Transverse colon (tissue), 4 donors: ENCODE measurements at regions of chr3 and their contacts with region 1.

Region 1: DNA sequence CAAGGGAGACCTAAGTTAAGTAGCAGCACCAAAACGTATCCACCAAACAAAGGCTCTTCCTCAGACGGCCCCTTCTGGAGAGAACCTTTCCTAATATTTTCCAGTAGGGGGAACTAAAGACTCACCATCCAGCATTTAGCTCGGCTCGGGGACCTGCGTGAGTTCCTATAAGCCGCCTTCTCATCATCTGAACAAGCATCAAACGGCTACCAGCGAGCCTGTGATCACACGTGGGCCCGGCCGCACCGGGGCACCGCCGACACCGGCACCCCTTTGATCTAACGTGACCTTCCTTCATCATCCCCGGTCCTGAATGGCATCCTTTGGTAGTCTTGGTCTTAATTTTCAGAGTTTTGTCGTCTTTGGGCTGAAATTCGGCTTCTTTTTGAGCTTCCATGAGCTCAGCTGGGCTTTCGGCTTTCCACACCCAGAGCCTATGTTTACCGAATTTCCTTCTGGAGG is 1.4 kb upstream of the ROBO2 start:
- DNase-seq: peak; percentile 40
- H3K4me3 ChIP-seq: peak overlapping the region in 2 of 4 donors; percentile 38 to 52
- H3K27ac ChIP-seq: no peak overlapping the region
- H3K4me1 ChIP-seq: peaks cover 0 to 21% (median 15%) of the 10 kb centered on the region in 4 donors
- H3K27me3 ChIP-seq: peaks cover 62% of the 10 kb centered on the region
- CTCF ChIP-seq: peak; percentile 47 to 62 (median 56)
- EP300 ChIP-seq: no peak
- POLR2A ChIP-seq: no peak

Region 2: GRCh38 chr3:77240072-77240650 is 201.7 kb after region 1 on chr3:
- in situ Hi-C with region 1: no loop called
- intact Hi-C with region 1: loop called (anchors 5 kb)
- DNase-seq: no peak
- H3K4me3 ChIP-seq: no peak overlapping the region
- H3K27ac ChIP-seq: no peak overlapping the region
- H3K4me1 ChIP-seq: no peaks in the 10 kb centered on the region
- H3K27me3 ChIP-seq: no peaks in the 10 kb centered on the region
- CTCF ChIP-seq: no peak
- EP300 ChIP-seq: no peak
- POLR2A ChIP-seq: no peak

Region 3: DNA sequence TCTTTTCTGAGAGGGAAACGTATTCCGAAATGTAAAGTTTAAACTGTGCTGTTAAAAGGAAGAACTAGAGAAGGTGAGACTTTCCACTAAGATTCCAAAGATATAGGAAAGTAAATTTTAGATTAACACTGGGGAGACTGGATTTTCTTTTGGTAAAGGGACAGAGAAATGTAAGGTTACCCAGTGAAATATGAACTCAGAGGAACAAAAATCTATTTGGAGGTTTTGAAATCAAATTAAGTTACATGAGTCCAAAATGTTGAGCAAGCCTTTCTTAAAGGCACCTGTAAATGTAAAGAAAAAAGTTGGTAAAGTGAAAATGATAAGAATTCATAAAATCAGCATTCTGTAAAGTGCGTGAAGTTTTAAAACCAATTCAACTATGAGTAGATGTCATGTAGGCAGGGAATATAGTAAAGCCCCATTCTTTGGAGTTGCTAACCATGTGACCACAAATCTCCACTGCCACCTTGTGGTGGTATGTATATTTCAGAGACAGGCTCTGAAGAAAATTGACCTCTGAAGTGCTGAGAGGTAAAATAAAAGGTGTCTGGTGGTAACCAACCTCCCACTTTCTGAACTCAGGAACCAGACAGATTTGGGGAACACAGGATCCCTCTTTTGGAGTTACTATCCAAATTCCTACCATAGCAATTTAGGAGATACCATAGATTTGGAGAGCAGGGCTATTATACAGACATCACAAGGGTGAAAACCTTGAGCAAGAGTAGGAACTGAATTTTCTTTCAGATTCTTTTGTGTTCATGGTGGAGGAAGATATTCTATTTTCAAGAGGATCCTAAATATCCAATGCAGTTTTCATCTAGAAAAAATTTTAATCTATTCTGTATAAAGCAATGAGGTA is 216.7 kb after region 1 on chr3:
- in situ Hi-C with region 1: loop called (anchors 5 to 10 kb)
- intact Hi-C with region 1: loop called (anchors 5 kb)
- DNase-seq: peak; percentile 16
- H3K4me3 ChIP-seq: no peak overlapping the region
- H3K27ac ChIP-seq: no peak overlapping the region
- H3K4me1 ChIP-seq: no peaks in the 10 kb centered on the region
- H3K27me3 ChIP-seq: no peaks in the 10 kb centered on the region
- CTCF ChIP-seq: peak; percentile 53 to 64 (median 63)
- EP300 ChIP-seq: no peak
- POLR2A ChIP-seq: no peak

Region 4: GRCh38 chr3:77296527-77296926 is 258.0 kb after region 1 on chr3:
- in situ Hi-C with region 1: no loop called
- intact Hi-C with region 1: no loop called
- DNase-seq: no peak
- H3K4me3 ChIP-seq: no peak overlapping the region
- H3K27ac ChIP-seq: no peak overlapping the region
- H3K4me1 ChIP-seq: no peaks in the 10 kb centered on the region
- H3K27me3 ChIP-seq: no peaks in the 10 kb centered on the region
- CTCF ChIP-seq: no peak
- EP300 ChIP-seq: no peak
- POLR2A ChIP-seq: no peak

Region 5: DNA sequence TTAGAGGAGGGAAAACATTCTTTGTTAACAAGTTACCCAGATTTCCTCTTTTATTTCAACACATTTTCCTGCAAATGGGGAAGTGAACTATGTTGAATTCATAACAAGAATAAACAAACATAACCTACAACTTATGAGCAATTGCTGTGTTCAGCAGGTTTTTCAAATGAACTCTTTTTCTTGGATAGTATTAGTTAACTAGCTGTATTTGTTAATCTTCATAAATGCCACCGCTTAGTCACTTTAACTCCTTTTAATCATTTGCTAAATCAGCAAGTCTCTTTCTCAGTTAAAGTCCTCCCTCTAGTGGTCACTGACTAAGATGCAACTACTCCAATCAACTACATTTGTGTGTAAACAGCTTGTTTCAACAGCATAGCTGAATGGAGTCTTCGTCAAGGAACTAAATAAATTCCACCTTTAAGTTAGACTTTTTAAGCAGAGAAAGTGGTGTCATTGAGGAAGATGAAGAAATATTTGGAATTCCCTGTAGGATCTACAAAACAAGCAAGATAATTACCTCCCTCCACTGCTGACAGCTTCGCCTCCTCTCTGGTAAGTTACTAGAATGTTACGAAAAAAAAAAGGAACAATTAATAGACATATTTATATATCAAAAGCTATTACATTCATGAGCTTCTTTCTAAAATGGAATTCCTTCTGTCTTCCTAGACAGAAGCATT is 1607.3 kb after region 1 on chr3:
- in situ Hi-C with region 1: loop called in 1 of 4 experiments (anchors 25 kb)
- intact Hi-C with region 1: no loop called
- DNase-seq: no peak
- H3K4me3 ChIP-seq: no peak overlapping the region
- H3K27ac ChIP-seq: no peak overlapping the region
- H3K4me1 ChIP-seq: peaks cover 0 to 14% (median 0%) of the 10 kb centered on the region in 4 donors
- H3K27me3 ChIP-seq: no peaks in the 10 kb centered on the region
- CTCF ChIP-seq: peak; percentile 64 to 85 (median 78)
- EP300 ChIP-seq: no peak
- POLR2A ChIP-seq: no peak